CD8-positive, alpha-beta T cell (primary cell): ENCODE measurements at regions of chr2 and their contacts with region 1.

Region 1: DNA sequence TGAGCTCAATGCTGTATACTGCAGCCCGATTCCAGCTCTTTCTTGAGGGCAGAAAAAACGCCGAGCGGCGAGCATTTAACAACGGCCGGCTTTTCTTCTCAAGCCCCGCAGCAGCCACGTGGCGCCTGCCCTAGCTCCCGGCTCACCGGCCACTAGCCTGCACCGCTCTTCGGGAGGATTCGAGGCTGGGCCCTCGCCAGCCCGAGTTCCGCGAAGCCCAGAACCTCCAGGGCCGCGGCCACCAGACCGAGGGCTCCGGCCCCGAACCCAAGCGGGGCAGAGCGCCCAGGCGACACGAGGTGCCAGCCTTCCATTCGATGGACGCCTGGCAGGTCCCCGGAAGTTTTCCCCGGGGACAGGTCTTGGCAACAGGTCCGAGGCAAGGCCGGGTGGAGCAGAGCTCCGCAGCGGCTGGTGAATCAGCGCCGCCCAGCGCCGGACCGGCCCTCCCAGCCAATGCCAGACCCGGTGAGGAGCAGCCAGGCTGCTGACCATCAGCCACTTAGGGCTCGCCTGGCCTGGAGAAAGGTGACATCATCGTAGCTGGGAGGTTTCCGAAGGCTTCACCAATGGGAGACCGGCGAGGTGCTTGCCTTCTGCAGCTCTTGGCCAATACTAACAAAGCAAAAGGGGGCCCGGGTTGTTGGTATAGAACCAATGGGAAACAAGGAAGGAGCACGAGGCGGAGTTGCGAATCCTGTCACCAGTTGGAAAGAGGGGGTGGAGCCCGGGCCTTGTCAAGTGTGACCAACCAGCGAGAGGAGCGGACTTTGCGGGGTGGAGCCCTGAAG is 544 bp upstream of the MXD1 start:
- DNase-seq: peak in 7 of 9 experiments; percentile 99 to 100 (median 100)
- ATAC-seq: peak; percentile 93
- H3K4me3 ChIP-seq: peak overlapping the region; percentile 87 to 89
- H3K4me3 Mint-ChIP-seq: peak overlapping the region; percentile 85
- H3K27ac ChIP-seq: peak overlapping the region; percentile 91 to 97
- H3K27ac Mint-ChIP-seq: peak overlapping the region; percentile 92
- H3K4me1 ChIP-seq: peaks cover 21% of the 10 kb centered on the region
- H3K4me1 Mint-ChIP-seq: peaks cover 30% of the 10 kb centered on the region
- H3K27me3 ChIP-seq: no peaks in the 10 kb centered on the region
- H3K27me3 Mint-ChIP-seq: no peaks in the 10 kb centered on the region
- CTCF ChIP-seq: no peak

Region 2: DNA sequence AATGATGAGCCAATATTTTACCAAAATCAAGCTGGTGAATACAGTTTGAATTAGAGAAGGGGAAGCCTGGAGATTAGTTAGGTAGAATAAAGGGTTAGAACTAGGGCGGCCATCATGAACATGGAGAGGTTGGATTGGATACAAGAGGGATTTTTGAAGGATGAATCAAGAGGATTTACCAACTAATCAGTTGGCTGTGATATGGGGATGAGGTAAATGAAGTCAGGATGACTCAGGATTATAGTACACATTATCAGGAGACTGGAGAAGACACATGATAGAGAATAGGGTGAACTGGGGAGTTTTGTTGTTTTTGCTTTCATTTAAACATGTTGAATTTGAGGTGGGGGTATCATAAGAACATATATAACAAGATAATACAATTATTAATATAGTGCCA is 1344.8 kb before region 1 on chr2:
- CTCF ChIA-PET with region 1: no interaction called
- POLR2A ChIA-PET with region 1: no interaction called
- intact Hi-C with region 1: no loop called
- DNase-seq: no peak
- ATAC-seq: no peak
- H3K4me3 ChIP-seq: no peak overlapping the region
- H3K4me3 Mint-ChIP-seq: no peak overlapping the region
- H3K27ac ChIP-seq: no peak overlapping the region
- H3K27ac Mint-ChIP-seq: no peak overlapping the region
- H3K4me1 ChIP-seq: no peaks in the 10 kb centered on the region
- H3K4me1 Mint-ChIP-seq: no peaks in the 10 kb centered on the region
- H3K27me3 ChIP-seq: no peaks in the 10 kb centered on the region
- H3K27me3 Mint-ChIP-seq: no peaks in the 10 kb centered on the region
- CTCF ChIP-seq: no peak

Region 3: GRCh38 chr2:69893684-69894551 is 20.4 kb before region 1 on chr2 and contains the start of gene SNRNP27:
- CTCF ChIA-PET with region 1: interaction called, 12 read pairs
- POLR2A ChIA-PET with region 1: interaction called, 13 read pairs
- intact Hi-C with region 1: loop called (anchors 1 to 2 kb)
- DNase-seq: peak; percentile 71 to 89 (median 83)
- ATAC-seq: peak; percentile 92
- H3K4me3 ChIP-seq: peak within 1 kb of the TSS; percentile 85 to 88
- H3K4me3 Mint-ChIP-seq: peak within 1 kb of the TSS; percentile 99
- H3K27ac ChIP-seq: peak within 1 kb of the TSS; percentile 82 to 86
- H3K27ac Mint-ChIP-seq: peak within 1 kb of the TSS; percentile 99
- H3K4me1 ChIP-seq: peaks cover 13% of the 10 kb centered on the region
- H3K4me1 Mint-ChIP-seq: peaks cover 46% of the 10 kb centered on the region
- H3K27me3 ChIP-seq: no peaks in the 10 kb centered on the region
- H3K27me3 Mint-ChIP-seq: no peaks in the 10 kb centered on the region
- CTCF ChIP-seq: no peak
- total RNA-seq, gene SNRNP27: 47.9 to 58.5 TPM

Region 4: GRCh38 chr2:69964353-69964841 is 50.0 kb after region 1 on chr2:
- CTCF ChIA-PET with region 1: no interaction called
- POLR2A ChIA-PET with region 1: no interaction called
- intact Hi-C with region 1: no loop called
- DNase-seq: no peak
- ATAC-seq: no peak
- H3K4me3 ChIP-seq: no peak overlapping the region
- H3K4me3 Mint-ChIP-seq: no peak overlapping the region
- H3K27ac ChIP-seq: no peak overlapping the region
- H3K27ac Mint-ChIP-seq: no peak overlapping the region
- H3K4me1 ChIP-seq: peaks cover 4% of the 10 kb centered on the region
- H3K4me1 Mint-ChIP-seq: peaks cover 4% of the 10 kb centered on the region
- H3K27me3 ChIP-seq: no peaks in the 10 kb centered on the region
- H3K27me3 Mint-ChIP-seq: no peaks in the 10 kb centered on the region
- CTCF ChIP-seq: no peak

Region 5: DNA sequence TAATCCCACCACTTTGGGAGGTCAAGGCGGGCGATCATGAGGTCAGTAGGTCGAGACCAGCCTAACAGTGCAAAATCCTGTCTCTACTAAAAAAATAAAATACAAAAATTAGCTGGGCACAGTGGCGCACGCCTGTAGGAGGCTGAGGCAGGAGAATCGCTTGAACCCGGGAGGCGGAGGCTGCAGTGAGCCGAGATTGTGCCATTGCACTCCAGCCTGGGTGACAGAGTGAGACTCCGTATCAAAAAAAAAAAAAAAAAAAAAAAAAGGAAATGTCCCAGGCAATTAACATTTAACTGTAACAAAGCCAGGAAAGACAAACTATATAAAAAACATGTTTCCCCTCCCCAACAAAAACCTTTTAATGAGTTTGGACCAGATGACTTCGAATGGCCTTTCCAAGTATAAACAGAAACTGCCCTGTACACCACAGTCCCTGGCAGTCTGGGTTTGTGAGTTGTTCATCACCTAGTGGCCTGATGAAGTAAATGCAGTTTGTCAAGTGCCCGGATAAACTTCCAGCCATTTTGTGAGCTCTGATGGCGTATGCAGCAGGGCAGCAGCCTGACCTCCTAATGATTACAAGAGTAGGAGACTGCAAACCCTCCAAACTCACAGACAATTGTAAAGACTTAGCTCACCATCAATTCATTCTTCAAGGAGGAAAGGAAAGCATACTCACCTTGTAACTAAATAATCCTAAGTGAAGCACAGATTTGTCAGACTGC is 156.3 kb after region 1 on chr2:
- CTCF ChIA-PET with region 1: interaction called, 58 read pairs
- POLR2A ChIA-PET with region 1: interaction called, 21 read pairs
- intact Hi-C with region 1: loop called (anchors 2 to 5 kb)
- DNase-seq: peak; percentile 32 to 91 (median 59)
- ATAC-seq: peak; percentile 73
- H3K4me3 ChIP-seq: peak overlapping the region in 1 of 2 experiments; percentile 17
- H3K4me3 Mint-ChIP-seq: peak overlapping the region; percentile 74
- H3K27ac ChIP-seq: peak overlapping the region; percentile 12 to 87
- H3K27ac Mint-ChIP-seq: peak overlapping the region; percentile 97
- H3K4me1 ChIP-seq: peaks cover 42% of the 10 kb centered on the region
- H3K4me1 Mint-ChIP-seq: peaks cover 49% of the 10 kb centered on the region
- H3K27me3 ChIP-seq: no peaks in the 10 kb centered on the region
- H3K27me3 Mint-ChIP-seq: no peaks in the 10 kb centered on the region
- CTCF ChIP-seq: peak; percentile 87

Region 6: DNA sequence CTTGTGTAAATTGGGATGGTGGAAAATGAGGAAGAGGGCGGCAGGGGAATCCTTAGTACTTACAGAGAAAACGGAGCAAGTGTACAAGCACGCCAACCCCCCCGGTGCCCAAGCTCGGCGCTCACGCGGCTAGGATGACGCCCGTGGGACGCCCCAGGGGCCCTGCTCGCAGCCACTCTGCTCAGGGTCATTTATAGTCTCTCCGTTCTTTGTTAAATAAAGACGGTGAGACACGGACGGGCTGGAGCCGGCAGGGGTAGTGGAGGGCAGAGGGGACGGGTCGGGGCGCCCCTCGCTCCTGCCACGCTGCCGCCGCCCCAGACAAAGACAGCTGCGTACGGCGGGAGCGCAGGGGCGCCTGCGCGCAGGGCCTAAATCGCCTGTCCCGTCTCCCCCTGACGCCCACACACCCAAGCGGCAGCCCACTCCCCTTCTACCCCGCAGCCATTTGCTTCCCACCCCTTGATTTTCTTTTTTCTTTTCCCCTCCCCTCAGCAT is 210.7 kb after region 1 on chr2:
- CTCF ChIA-PET with region 1: interaction called, 3 read pairs
- POLR2A ChIA-PET with region 1: interaction called, 19 read pairs
- intact Hi-C with region 1: no loop called
- DNase-seq: peak; percentile 52 to 85 (median 70)
- ATAC-seq: peak; percentile 64
- H3K4me3 ChIP-seq: peak overlapping the region; percentile 47 to 61
- H3K4me3 Mint-ChIP-seq: peak overlapping the region; percentile 95
- H3K27ac ChIP-seq: peak overlapping the region; percentile 97
- H3K27ac Mint-ChIP-seq: peak overlapping the region; percentile 100
- H3K4me1 ChIP-seq: peaks cover 62% of the 10 kb centered on the region
- H3K4me1 Mint-ChIP-seq: peaks cover 70% of the 10 kb centered on the region
- H3K27me3 ChIP-seq: no peaks in the 10 kb centered on the region
- H3K27me3 Mint-ChIP-seq: no peaks in the 10 kb centered on the region
- CTCF ChIP-seq: no peak

Region 7: DNA sequence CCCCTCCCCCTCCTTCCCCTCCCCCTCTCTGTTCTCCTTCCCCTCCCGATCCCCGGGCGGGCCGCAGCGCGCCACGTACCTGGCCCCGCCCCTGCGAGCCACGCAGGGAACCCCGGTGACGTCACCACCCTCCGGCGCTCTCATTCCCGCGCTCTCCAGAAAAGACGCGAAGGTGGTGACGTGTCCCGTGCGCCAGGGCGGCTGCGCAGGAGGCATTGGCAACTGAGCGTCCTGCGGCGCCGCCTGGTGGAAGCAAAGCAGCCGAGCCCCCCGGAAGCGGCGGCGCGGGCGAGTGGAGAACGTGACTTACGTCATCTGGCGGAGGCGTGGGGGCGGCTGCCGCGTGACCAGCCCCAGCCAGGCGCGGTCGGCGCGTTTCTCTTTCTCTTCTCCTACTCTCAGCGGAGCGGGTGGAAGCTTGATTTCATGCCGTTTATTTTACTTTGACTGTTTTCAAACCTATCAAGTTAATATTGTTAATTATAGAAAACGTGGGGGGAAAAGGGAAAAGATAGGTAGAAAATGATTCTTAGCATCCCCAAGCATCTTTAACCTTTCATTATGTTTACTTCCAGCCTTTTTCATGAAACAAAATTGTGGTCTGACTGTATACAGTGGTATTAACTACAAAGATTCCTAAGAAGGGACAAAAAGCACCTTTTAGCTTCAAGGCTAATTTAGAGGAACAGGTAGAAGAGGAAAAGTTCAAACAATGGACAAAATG is 228.4 kb after region 1 on chr2:
- CTCF ChIA-PET with region 1: interaction called, 71 read pairs
- POLR2A ChIA-PET with region 1: interaction called, 44 read pairs
- intact Hi-C with region 1: loop called (anchors 1 kb)
- DNase-seq: peak; percentile 99 to 100 (median 100)
- ATAC-seq: peak; percentile 73
- H3K4me3 ChIP-seq: peak overlapping the region; percentile 54 to 56
- H3K4me3 Mint-ChIP-seq: peak overlapping the region; percentile 91
- H3K27ac ChIP-seq: peak overlapping the region; percentile 89 to 97
- H3K27ac Mint-ChIP-seq: peak overlapping the region; percentile 100
- H3K4me1 ChIP-seq: peaks cover 49% of the 10 kb centered on the region
- H3K4me1 Mint-ChIP-seq: peaks cover 53% of the 10 kb centered on the region
- H3K27me3 ChIP-seq: no peaks in the 10 kb centered on the region
- H3K27me3 Mint-ChIP-seq: no peaks in the 10 kb centered on the region
- CTCF ChIP-seq: peak; percentile 89

Region 8: GRCh38 chr2:70248181-70248847 is 333.9 kb after region 1 on chr2 and contains the start of gene TIA1:
- CTCF ChIA-PET with region 1: interaction called, 3 read pairs
- POLR2A ChIA-PET with region 1: interaction called, 4 read pairs
- intact Hi-C with region 1: loop called (anchors 1 to 5 kb)
- DNase-seq: peak; percentile 96 to 100 (median 98)
- ATAC-seq: peak; percentile 98
- H3K4me3 ChIP-seq: peak within 1 kb of the TSS; percentile 86 to 90
- H3K4me3 Mint-ChIP-seq: peak within 1 kb of the TSS; percentile 97
- H3K27ac ChIP-seq: peak within 1 kb of the TSS; percentile 86 to 92
- H3K27ac Mint-ChIP-seq: peak within 1 kb of the TSS; percentile 98
- H3K4me1 ChIP-seq: peaks cover 30% of the 10 kb centered on the region
- H3K4me1 Mint-ChIP-seq: peaks cover 37% of the 10 kb centered on the region
- H3K27me3 ChIP-seq: no peaks in the 10 kb centered on the region
- H3K27me3 Mint-ChIP-seq: no peaks in the 10 kb centered on the region
- CTCF ChIP-seq: no peak
- total RNA-seq, gene TIA1: 55.9 to 62.6 TPM

Region 9: GRCh38 chr2:70616168-70616694 is 701.9 kb after region 1 on chr2:
- CTCF ChIA-PET with region 1: interaction called, 3 read pairs
- POLR2A ChIA-PET with region 1: no interaction called
- intact Hi-C with region 1: loop called (anchors 5 kb)
- DNase-seq: no peak
- ATAC-seq: no peak
- H3K4me3 ChIP-seq: no peak overlapping the region
- H3K4me3 Mint-ChIP-seq: no peak overlapping the region
- H3K27ac ChIP-seq: no peak overlapping the region
- H3K27ac Mint-ChIP-seq: no peak overlapping the region
- H3K4me1 ChIP-seq: no peaks in the 10 kb centered on the region
- H3K4me1 Mint-ChIP-seq: no peaks in the 10 kb centered on the region
- H3K27me3 ChIP-seq: no peaks in the 10 kb centered on the region
- H3K27me3 Mint-ChIP-seq: peaks cover 6% of the 10 kb centered on the region
- CTCF ChIP-seq: no peak